Activated naive CD4-positive, alpha-beta T cell treated with anti-CD3 and anti-CD28 coated beads for 36 hours (primary cell): ENCODE measurements at regions of chr7 and their contacts with region 1.

Region 1: GRCh38 chr7:27784393-27785053 is 44.6 kb downstream of the TAX1BP1 start:
- DNase-seq: peak; percentile 26
- H3K4me3 Mint-ChIP-seq: no peak overlapping the region
- H3K27ac Mint-ChIP-seq: no peak overlapping the region
- H3K4me1 Mint-ChIP-seq: peaks cover 37% of the 10 kb centered on the region
- H3K27me3 Mint-ChIP-seq: no peaks in the 10 kb centered on the region

Region 2: GRCh38 chr7:27662490-27663205 is 121.9 kb before region 1 on chr7 and contains the start of gene HIBADH:
- CTCF ChIA-PET with region 1: no interaction called
- intact Hi-C with region 1: loop called (anchors 1 kb)
- DNase-seq: peak; percentile 97
- H3K4me3 Mint-ChIP-seq: peak within 1 kb of the TSS; percentile 82
- H3K27ac Mint-ChIP-seq: peak within 1 kb of the TSS; percentile 69
- H3K4me1 Mint-ChIP-seq: peaks cover 14% of the 10 kb centered on the region
- H3K27me3 Mint-ChIP-seq: no peaks in the 10 kb centered on the region
- total RNA-seq, gene HIBADH: 20.8 to 22.5 TPM

Region 3: DNA sequence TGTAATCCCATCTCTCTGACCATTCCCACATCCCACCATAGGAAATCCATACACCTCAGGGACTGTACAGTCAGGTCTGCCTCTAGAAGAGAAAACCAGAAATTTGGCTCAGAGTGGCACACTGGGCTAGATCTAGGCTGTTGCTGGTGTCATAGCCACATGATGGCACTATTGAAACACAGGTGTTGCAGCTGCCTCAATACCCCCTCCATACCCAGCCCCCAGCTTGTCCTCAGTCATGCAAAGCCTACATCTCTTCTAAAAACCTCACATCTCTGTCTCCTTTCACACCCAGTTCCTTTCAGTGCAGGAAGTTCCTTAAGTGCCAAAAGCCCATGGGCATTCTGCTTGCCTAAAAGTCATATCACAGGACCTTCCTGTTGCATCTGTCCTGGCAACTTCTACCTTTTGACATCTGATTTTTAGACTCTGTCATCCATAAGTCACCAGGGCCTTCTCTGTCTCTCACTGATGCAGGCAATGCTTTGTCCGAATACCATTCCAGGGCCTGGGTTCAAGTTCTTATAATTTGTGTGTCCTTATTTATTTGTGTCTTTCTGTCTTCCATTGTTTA is 94.8 kb before region 1 on chr7:
- CTCF ChIA-PET with region 1: no interaction called
- intact Hi-C with region 1: loop called (anchors 2 kb)
- DNase-seq: peak; percentile 39
- H3K4me3 Mint-ChIP-seq: no peak overlapping the region
- H3K27ac Mint-ChIP-seq: no peak overlapping the region
- H3K4me1 Mint-ChIP-seq: no peaks in the 10 kb centered on the region
- H3K27me3 Mint-ChIP-seq: peaks cover 4% of the 10 kb centered on the region

Region 4: DNA sequence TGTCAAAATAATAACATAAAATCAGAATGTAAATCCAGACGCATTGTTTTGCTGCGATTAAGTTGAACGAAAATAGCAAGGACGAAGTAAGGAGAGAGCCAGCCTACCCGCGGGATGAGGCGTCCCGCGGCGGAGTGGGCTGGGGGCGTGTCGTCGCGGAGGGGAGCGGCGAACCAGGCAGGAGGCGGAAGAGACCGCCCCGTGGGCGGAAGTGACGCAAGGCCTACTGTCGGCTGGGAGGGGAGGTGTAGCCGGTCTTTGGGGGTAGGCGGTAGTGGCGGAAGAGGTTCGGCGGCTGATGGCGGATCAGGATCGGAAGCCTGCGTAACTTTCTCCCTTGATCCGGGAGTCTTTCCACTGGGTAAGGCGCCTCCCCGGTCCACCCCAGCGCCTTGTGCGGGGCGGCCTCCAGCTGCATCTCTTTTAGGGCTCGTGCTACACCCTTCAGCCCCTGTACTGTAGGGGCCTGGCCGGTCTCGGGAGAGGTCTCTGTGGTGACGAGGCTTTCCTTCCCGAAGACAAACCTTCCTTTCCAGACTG is 44.5 kb before region 1 on chr7 and contains the start of gene TAX1BP1:
- CTCF ChIA-PET with region 1: interaction called, 4 read pairs
- intact Hi-C with region 1: loop called (anchors 1 kb)
- DNase-seq: peak; percentile 96
- H3K4me3 Mint-ChIP-seq: peak within 1 kb of the TSS; percentile 96
- H3K27ac Mint-ChIP-seq: peak within 1 kb of the TSS; percentile 98
- H3K4me1 Mint-ChIP-seq: peaks cover 35% of the 10 kb centered on the region
- H3K27me3 Mint-ChIP-seq: no peaks in the 10 kb centered on the region
- total RNA-seq, gene TAX1BP1: 84.1 to 87.9 TPM

Region 5: GRCh38 chr7:27808626-27809025 is 24.1 kb after region 1 on chr7:
- CTCF ChIA-PET with region 1: no interaction called
- intact Hi-C with region 1: no loop called
- DNase-seq: no peak
- H3K4me3 Mint-ChIP-seq: no peak overlapping the region
- H3K27ac Mint-ChIP-seq: no peak overlapping the region
- H3K4me1 Mint-ChIP-seq: peaks cover 7% of the 10 kb centered on the region
- H3K27me3 Mint-ChIP-seq: no peaks in the 10 kb centered on the region

Region 6: GRCh38 chr7:27901028-27901760 is 116.7 kb after region 1 on chr7:
- CTCF ChIA-PET with region 1: no interaction called
- intact Hi-C with region 1: loop called (anchors 2 kb)
- DNase-seq: peak; percentile 51
- H3K4me3 Mint-ChIP-seq: no peak overlapping the region
- H3K27ac Mint-ChIP-seq: no peak overlapping the region
- H3K4me1 Mint-ChIP-seq: peaks cover 30% of the 10 kb centered on the region
- H3K27me3 Mint-ChIP-seq: no peaks in the 10 kb centered on the region

Region 7: GRCh38 chr7:28020302-28020940 is 235.9 kb after region 1 on chr7:
- CTCF ChIA-PET with region 1: interaction called, 6 read pairs
- intact Hi-C with region 1: loop called (anchors 1 kb)
- DNase-seq: peak; percentile 60
- H3K4me3 Mint-ChIP-seq: no peak overlapping the region
- H3K27ac Mint-ChIP-seq: no peak overlapping the region
- H3K4me1 Mint-ChIP-seq: no peaks in the 10 kb centered on the region
- H3K27me3 Mint-ChIP-seq: no peaks in the 10 kb centered on the region